ENCODE measurements at regions of chr12 and their contacts with region 1.

Region 1: DNA sequence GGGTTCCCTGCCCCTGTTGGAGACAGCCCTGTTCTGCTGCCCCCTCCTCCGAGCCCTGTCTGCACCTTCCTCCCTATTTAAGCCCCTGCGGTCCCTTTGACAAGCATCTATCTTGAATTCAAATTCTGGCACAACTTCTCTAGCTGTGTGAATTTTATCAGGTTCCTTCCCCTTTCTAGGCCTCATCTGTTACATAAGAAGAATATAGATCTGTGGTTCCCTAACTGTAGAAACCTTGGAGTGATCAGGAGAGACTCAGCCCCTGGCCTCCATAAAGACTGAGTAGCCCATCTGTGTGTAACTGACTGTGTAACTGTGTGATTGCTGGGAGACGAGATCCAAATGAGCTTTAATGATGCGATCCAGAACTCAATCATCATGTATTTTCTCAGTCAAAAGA is 13.0 kb upstream of the RACGAP1 start:
- DNase-seq: no peak
- ATAC-seq: no peak
- H3K4me3 ChIP-seq: no peak overlapping the region
- H3K27ac ChIP-seq: no peak overlapping the region
- H3K4me1 ChIP-seq: no peaks in the 10 kb centered on the region
- H3K27me3 ChIP-seq: no peaks in the 10 kb centered on the region
- CTCF ChIP-seq: no peak
- EP300 ChIP-seq: no peak
- POLR2A ChIP-seq: no peak
- RAD21 ChIP-seq: no peak

Region 2: DNA sequence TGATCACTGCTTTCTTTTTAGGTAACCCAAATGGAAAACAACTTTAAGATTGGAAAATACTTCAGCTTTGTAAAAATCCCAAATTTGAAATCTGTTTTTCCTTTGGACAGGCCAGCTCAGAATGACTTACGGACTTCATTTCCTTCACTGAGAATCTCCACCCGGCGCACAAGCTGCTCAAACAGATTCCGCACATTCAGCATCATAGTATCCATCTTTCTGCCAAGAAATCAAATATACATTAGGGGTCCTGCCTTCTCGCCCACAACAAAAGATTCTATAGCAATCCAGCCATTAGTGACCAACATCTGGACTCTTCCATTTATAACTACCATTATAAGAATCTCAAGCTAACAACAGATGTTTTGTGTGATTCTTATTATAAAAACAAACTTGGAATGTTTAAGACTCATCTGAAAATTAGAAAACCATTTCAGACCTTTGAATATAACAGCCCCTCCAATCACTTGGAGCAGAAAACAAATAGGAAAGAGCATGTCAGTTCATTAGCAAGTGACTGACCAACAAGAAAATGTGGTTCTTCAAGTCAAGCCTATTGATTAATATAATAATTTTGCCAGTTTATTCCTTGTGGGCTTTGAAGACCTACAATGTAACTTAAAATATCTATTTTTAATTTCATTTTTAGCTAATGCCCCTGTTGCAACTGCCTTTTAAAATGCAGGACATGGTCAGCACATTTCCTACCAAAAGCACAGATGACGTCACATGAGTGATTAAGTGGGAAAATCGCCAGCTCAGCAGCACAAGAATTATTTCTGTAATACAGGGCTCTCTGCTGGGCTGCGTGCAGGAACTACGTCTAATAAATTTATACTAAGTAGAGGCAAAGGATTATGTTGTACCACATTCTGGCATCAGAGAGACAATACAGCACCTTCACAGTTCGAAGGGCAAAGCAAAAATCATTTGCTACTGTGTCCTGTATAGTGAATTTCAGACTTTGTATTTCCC is 21.5 kb before region 1 on chr12:
- CTCF ChIA-PET with region 1: interaction called, 114 read pairs
- POLR2A ChIA-PET with region 1: interaction called, 3 read pairs
- RAD21 ChIA-PET with region 1: no interaction called
- SMC1A ChIA-PET with region 1: no interaction called
- in situ Hi-C with region 1: no loop called
- intact Hi-C with region 1: no loop called
- DNase-seq: no peak
- ATAC-seq: no peak
- H3K4me3 ChIP-seq: no peak overlapping the region
- H3K27ac ChIP-seq: no peak overlapping the region
- H3K4me1 ChIP-seq: no peaks in the 10 kb centered on the region
- H3K27me3 ChIP-seq: no peaks in the 10 kb centered on the region
- CTCF ChIP-seq: no peak
- EP300 ChIP-seq: no peak
- POLR2A ChIP-seq: no peak
- RAD21 ChIP-seq: no peak

Region 3: GRCh38 chr12:50049254-50050118 is 11.2 kb after region 1 on chr12:
- CTCF ChIA-PET with region 1: interaction called, 39 read pairs
- POLR2A ChIA-PET with region 1: no interaction called
- RAD21 ChIA-PET with region 1: no interaction called
- SMC1A ChIA-PET with region 1: interaction called, 3 read pairs
- in situ Hi-C with region 1: no loop called
- intact Hi-C with region 1: no loop called
- DNase-seq: no peak
- ATAC-seq: no peak
- H3K4me3 ChIP-seq: no peak overlapping the region
- H3K27ac ChIP-seq: no peak overlapping the region
- H3K4me1 ChIP-seq: no peaks in the 10 kb centered on the region
- H3K27me3 ChIP-seq: peaks cover 8 to 10% of the 10 kb centered on the region in 2 experiments; a peak in 3 of 4 replicates
- CTCF ChIP-seq: no peak
- EP300 ChIP-seq: no peak
- POLR2A ChIP-seq: no peak
- RAD21 ChIP-seq: no peak